H1 (cell line): ENCODE measurements at regions of chr6 and their contacts with region 1.

Region 1: GRCh38 chr6:165245287-165245686 is 64.1 kb downstream of the C6orf118 start:
- DNase-seq: no peak
- H3K4me3 ChIP-seq: no peak overlapping the region
- H3K27ac ChIP-seq: no peak overlapping the region
- H3K4me1 ChIP-seq: peaks cover 0 to 7% (median 4%) of the 10 kb centered on the region in 4 experiments; a peak in 3 of 7 replicates
- H3K27me3 ChIP-seq: no peaks in the 10 kb centered on the region
- CTCF ChIP-seq: peak in 1 of 3 experiments; percentile 43; a peak in 1 of 4 replicates
- EP300 ChIP-seq: no peak
- POLR2A ChIP-seq: no peak
- RAD21 ChIP-seq: peak; percentile 53 to 58

Region 2: GRCh38 chr6:165110860-165111259 is 134.4 kb before region 1 on chr6:
- CTCF ChIA-PET with region 1: no interaction called
- POLR2A ChIA-PET with region 1: no interaction called
- DNase-seq: no peak
- H3K4me3 ChIP-seq: no peak overlapping the region
- H3K27ac ChIP-seq: no peak overlapping the region
- H3K4me1 ChIP-seq: no peaks in the 10 kb centered on the region
- H3K27me3 ChIP-seq: no peaks in the 10 kb centered on the region
- CTCF ChIP-seq: no peak
- EP300 ChIP-seq: no peak
- POLR2A ChIP-seq: no peak
- RAD21 ChIP-seq: no peak

Region 3: GRCh38 chr6:165231581-165232561 is 13.4 kb before region 1 on chr6:
- CTCF ChIA-PET with region 1: interaction called, 52 read pairs
- POLR2A ChIA-PET with region 1: no interaction called
- DNase-seq: no peak
- H3K4me3 ChIP-seq: no peak overlapping the region
- H3K27ac ChIP-seq: no peak overlapping the region
- H3K4me1 ChIP-seq: no peaks in the 10 kb centered on the region
- H3K27me3 ChIP-seq: no peaks in the 10 kb centered on the region
- CTCF ChIP-seq: peak in 2 of 3 experiments; percentile 64 to 68; a peak in 3 of 4 replicates
- EP300 ChIP-seq: no peak
- POLR2A ChIP-seq: no peak
- RAD21 ChIP-seq: peak; percentile 82 to 83